Stomach (tissue), 19 donors: ENCODE measurements at regions of chr12 and their contacts with region 1.

Region 1: GRCh38 chr12:56510786-56511185 is 10.8 kb upstream of the RBMS2 start:
- DNase-seq: no peak
- H3K4me3 ChIP-seq: no peak overlapping the region
- H3K27ac ChIP-seq: no peak overlapping the region
- H3K4me1 ChIP-seq: peaks cover 0 to 7% (median 3%) of the 10 kb centered on the region in 4 donors
- H3K27me3 ChIP-seq: no peaks in the 10 kb centered on the region
- CTCF ChIP-seq: no peak
- EP300 ChIP-seq: no peak
- POLR2A ChIP-seq: no peak

Region 2: GRCh38 chr12:56571126-56571525 is 60.3 kb after region 1 on chr12:
- intact Hi-C with region 1: loop called (anchors 5 kb)
- DNase-seq: peak in 1 of 2 donors; percentile 90
- H3K4me3 ChIP-seq: no peak overlapping the region
- H3K27ac ChIP-seq: peak overlapping the region in 4 of 5 donors; percentile 56 to 83 (median 69)
- H3K4me1 ChIP-seq: peaks cover 0 to 37% (median 6%) of the 10 kb centered on the region in 4 donors
- H3K27me3 ChIP-seq: no peaks in the 10 kb centered on the region
- CTCF ChIP-seq: no peak
- EP300 ChIP-seq: no peak
- POLR2A ChIP-seq: no peak

Region 3: DNA sequence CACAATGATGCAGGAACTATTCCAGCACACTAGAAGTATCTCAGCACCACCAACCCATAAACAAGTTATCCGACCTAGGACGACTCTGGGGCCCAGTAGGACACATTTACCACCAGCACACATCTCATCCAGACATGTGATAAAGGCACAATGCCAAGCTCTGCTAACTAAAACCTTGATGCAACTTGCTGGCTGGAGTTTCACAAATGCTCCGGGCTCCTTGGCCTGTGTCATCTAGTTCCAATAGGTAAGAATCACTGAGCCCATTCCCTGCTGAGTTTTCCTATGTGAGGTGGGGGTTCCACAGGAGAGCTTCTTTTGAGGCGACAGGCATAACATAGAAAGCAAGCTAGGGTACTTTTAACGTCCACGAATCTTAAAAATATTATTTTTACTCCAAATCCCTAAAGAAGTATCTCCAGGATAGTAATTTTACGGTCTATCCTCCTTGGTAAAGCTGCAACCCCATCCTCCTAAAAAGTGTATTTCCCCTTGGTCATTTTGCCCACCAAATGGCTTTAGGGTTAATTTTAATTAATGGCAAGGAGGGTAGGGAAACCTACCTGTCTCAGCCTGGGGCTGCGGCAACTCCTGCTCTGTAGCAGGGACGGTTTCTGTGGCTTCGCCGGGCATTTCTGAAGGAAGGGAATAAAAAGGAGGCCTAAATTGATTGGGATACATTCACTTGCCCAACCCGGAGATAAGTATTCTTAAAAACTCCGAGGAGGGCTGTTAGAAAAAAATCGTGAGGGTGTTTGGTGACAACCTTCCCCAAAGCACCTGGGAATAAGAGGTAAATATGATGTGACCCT is 213.3 kb after region 1 on chr12:
- intact Hi-C with region 1: no loop called
- DNase-seq: peak; percentile 34 to 72
- H3K4me3 ChIP-seq: peak overlapping the region; percentile 72 to 93 (median 85)
- H3K27ac ChIP-seq: peak overlapping the region; percentile 86 to 96 (median 90)
- H3K4me1 ChIP-seq: peaks cover 52 to 66% (median 63%) of the 10 kb centered on the region in 4 donors
- H3K27me3 ChIP-seq: no peaks in the 10 kb centered on the region
- CTCF ChIP-seq: no peak
- EP300 ChIP-seq: no peak
- POLR2A ChIP-seq: no peak